ENCODE measurements at regions of chr14 and their contacts with region 1.

Region 1: GRCh38 chr14:54509546-54510501 is at the start of gene CGRRF1:
- DNase-seq: peak; percentile 97 to 100 (median 99)

Region 2: GRCh38 chr14:54440873-54441868 is 68.7 kb before region 1 on chr14 and contains the start of gene CNIH1:
- intact Hi-C with region 1: loop called (anchors 5 kb)
- DNase-seq: peak; percentile 72 to 97 (median 93)